CD4-positive, alpha-beta T cell (primary cell): ENCODE measurements at regions of chr14 and their contacts with region 1.

Region 1: GRCh38 chr14:24710403-24711112 is 76.6 kb upstream of the GZMB start:
- DNase-seq: peak in 13 of 14 experiments; percentile 26 to 73 (median 37)
- ATAC-seq: peak; percentile 43
- H3K4me3 ChIP-seq: no peak overlapping the region
- H3K4me3 Mint-ChIP-seq: no peak overlapping the region
- H3K27ac ChIP-seq: no peak overlapping the region
- H3K27ac Mint-ChIP-seq: no peak overlapping the region
- H3K4me1 ChIP-seq: no peaks in the 10 kb centered on the region
- H3K4me1 Mint-ChIP-seq: no peaks in the 10 kb centered on the region
- H3K27me3 ChIP-seq: no peaks in the 10 kb centered on the region
- H3K27me3 Mint-ChIP-seq: peaks cover 14% of the 10 kb centered on the region
- CTCF ChIP-seq: peak; percentile 90

Region 2: DNA sequence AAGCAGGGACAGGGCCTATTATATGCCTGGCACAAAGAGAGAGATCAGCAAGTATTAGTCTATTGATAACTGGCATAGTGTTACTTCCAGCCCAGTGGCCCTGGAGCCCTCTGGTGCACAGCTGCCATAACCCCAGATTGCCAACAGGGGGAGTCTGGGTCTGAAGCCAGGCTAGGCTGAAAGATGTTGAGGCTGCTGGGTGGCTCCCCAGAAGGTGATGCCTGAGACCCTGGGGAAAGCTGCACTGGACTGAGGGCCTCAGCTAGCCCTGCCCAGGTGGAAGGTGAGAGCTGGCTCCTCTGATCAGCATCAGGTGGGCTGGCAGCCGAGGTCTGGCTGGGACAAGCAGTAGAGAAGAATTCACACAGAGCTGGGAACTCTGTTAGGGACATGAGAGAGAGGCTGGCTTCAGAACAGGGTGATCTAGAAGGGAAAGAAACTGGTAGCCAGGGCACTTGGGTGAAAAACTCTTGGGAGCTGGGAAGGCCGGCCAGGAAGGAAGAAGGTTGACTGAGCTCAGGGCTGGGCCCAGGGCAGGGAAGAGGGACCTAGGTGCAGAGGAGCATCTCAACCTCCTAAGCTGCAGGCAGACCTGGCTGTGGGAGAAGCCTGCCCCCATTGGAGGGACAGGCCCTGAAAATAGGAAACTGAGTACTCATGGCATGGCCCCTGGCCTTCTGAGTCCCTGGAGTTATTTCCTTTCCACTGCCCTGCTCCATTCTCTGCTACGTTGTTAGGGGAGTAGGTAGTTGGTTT is 104.9 kb before region 1 on chr14:
- CTCF ChIA-PET with region 1: interaction called, 10 read pairs
- POLR2A ChIA-PET with region 1: no interaction called
- intact Hi-C with region 1: no loop called
- DNase-seq: peak; percentile 21 to 72 (median 54)
- ATAC-seq: peak; percentile 71
- H3K4me3 ChIP-seq: no peak overlapping the region
- H3K4me3 Mint-ChIP-seq: no peak overlapping the region
- H3K27ac ChIP-seq: no peak overlapping the region
- H3K27ac Mint-ChIP-seq: no peak overlapping the region
- H3K4me1 ChIP-seq: peaks cover 19% of the 10 kb centered on the region
- H3K4me1 Mint-ChIP-seq: peaks cover 4% of the 10 kb centered on the region
- H3K27me3 ChIP-seq: peaks cover 0 to 5% of the 10 kb centered on the region in 2 experiments
- H3K27me3 Mint-ChIP-seq: peaks cover 19% of the 10 kb centered on the region
- CTCF ChIP-seq: peak; percentile 86

Region 3: DNA sequence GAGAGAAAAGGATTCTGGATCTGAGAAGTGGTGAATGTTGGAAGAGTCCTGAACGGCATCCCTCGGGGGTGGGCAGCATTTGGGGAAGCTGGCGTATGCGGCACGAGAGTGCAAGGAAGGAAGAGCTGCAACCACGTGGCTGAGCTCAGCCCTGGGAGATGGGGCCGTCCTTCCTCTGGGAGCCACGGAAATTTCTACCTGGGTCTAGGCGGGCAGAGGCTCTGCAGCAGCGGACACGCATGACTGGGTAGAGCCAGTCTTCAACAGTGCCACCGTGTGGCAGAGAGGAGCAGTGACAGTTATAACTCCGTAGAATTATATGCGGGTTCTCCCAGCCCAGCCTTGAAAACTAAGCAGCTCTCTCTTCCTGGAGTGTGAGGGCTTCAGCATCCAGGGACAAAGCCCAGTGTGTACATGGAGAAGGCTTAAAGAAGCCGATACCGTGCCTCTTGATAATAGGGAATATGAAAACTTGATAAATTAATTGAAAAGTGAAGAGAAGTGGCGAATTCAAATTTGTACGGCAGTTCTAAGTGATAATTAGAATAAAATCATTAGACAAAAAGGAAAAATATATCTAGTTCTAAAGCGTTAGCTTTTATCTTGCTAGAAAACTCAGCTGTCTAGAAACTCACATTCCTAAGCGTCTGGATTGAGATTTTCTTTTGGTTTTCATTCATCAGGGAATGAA is 422.3 kb after region 1 on chr14:
- CTCF ChIA-PET with region 1: interaction called, 7 read pairs
- POLR2A ChIA-PET with region 1: no interaction called
- intact Hi-C with region 1: loop called in 1 of 2 experiments (anchors 10 kb)
- DNase-seq: peak; percentile 1 to 67 (median 25)
- ATAC-seq: peak; percentile 73
- H3K4me3 ChIP-seq: no peak overlapping the region
- H3K4me3 Mint-ChIP-seq: no peak overlapping the region
- H3K27ac ChIP-seq: no peak overlapping the region
- H3K27ac Mint-ChIP-seq: no peak overlapping the region
- H3K4me1 ChIP-seq: peaks cover 3% of the 10 kb centered on the region
- H3K4me1 Mint-ChIP-seq: no peaks in the 10 kb centered on the region
- H3K27me3 ChIP-seq: peaks cover 8 to 19% of the 10 kb centered on the region in 2 experiments
- H3K27me3 Mint-ChIP-seq: peaks cover 53% of the 10 kb centered on the region
- CTCF ChIP-seq: peak; percentile 68

Region 4: DNA sequence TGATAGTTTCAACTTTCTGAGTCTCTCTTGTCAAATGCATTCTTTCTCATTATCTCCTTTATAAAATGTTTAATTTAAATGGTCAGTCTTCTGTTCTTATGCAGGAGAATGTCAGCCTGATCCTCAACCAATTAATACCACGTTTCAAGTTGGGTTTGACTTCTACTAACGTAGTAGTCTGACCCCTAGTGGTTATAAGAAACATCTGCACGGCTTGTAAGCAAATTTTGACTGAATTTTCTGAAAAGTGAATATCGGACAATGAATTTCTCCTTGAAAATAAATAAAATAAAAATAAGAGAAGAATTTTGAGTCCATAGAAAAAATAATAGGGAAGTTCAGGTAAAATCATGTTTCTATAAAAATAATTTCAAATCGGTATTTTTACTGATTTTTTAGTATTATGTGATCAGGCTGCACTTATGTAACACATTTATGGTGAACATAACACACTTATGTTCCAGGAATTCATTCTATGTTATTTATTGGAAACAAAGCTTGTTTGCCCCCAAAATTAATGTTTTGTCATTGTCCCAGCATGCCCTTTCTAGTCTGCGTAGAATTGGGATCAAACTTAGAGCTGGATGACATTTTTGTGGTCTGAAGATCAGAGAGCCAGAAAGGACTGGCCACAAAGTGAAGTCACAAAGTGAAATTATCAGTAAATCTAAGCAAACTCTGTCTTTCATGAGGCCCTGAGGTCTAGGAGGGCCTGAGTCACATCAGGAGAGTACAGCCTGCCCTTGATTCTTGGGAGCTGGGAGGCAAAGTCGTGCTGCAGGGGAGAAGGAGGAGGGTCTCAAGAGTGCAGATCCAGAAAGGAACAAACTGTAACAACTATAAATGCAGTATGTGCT is 440.6 kb after region 1 on chr14:
- CTCF ChIA-PET with region 1: no interaction called
- POLR2A ChIA-PET with region 1: no interaction called
- intact Hi-C with region 1: loop called in 1 of 2 experiments (anchors 5 kb)
- DNase-seq: peak in 3 of 14 experiments; percentile 21 to 28 (median 22)
- ATAC-seq: no peak
- H3K4me3 ChIP-seq: no peak overlapping the region
- H3K4me3 Mint-ChIP-seq: no peak overlapping the region
- H3K27ac ChIP-seq: no peak overlapping the region
- H3K27ac Mint-ChIP-seq: no peak overlapping the region
- H3K4me1 ChIP-seq: no peaks in the 10 kb centered on the region
- H3K4me1 Mint-ChIP-seq: no peaks in the 10 kb centered on the region
- H3K27me3 ChIP-seq: no peaks in the 10 kb centered on the region
- H3K27me3 Mint-ChIP-seq: peaks cover 34% of the 10 kb centered on the region
- CTCF ChIP-seq: peak; percentile 85